Sigmoid colon (tissue), 7 donors: ENCODE measurements at regions of chr2 and their contacts with region 1.

Region 1: GRCh38 chr2:64586883-64587481 is 62.9 kb downstream of the AFTPH start:
- DNase-seq: no peak
- H3K4me3 ChIP-seq: no peak overlapping the region
- H3K27ac ChIP-seq: no peak overlapping the region
- H3K4me1 ChIP-seq: peaks cover 0 to 6% (median 2%) of the 10 kb centered on the region in 4 donors
- H3K27me3 ChIP-seq: no peaks in the 10 kb centered on the region
- CTCF ChIP-seq: peak; percentile 33 to 60 (median 54)
- EP300 ChIP-seq: no peak
- POLR2A ChIP-seq: no peak

Region 2: GRCh38 chr2:64214281-64215115 is 372.5 kb before region 1 on chr2:
- intact Hi-C with region 1: no loop called
- DNase-seq: no peak
- H3K4me3 ChIP-seq: no peak overlapping the region
- H3K27ac ChIP-seq: peak overlapping the region; percentile 38 to 69 (median 44)
- H3K4me1 ChIP-seq: peaks cover 0 to 15% (median 12%) of the 10 kb centered on the region in 4 donors
- H3K27me3 ChIP-seq: no peaks in the 10 kb centered on the region
- CTCF ChIP-seq: no peak
- EP300 ChIP-seq: no peak
- POLR2A ChIP-seq: no peak

Region 3: DNA sequence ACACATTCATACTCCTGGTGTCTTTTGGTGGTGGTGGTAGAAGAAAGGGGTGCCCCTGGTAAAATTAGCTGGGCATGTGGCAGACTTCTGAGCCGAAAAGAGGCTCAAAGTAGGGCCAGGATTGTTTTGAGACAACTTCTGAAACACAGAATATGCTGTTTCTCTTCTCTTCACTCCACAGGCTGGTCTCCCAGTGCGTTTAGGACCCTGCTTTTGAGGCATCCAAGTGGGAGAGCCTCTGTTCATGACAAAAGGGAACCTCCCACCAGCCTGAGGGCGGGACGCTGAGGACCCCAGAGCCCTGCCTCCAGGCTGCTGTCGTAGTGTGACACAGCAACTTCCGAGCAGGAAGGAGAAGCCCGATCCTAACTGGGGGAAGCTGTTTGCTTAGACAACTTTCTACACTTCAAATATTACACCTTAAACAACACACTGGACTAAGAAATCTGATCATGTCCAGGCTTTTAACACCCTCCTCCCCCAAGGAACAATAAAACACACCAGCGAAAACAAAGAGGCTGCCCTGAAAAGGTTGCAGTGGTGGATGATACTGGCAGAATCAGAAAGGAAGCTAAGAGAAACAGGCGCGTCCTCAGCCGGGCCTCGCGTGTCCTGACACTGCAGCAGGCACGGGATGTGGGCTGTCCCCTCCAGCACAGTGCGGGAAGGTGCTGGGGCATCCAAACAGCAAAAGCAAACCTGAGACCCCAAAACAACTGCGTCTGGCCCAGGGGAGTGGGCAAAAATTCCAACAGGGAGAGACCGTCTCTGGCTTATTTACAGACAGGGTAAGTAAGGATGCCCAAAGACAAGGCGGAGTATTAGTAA is 57.4 kb after region 1 on chr2:
- intact Hi-C with region 1: loop called (anchors 5 kb)
- DNase-seq: peak; percentile 92
- H3K4me3 ChIP-seq: peak overlapping the region; percentile 31 to 52 (median 46)
- H3K27ac ChIP-seq: peak overlapping the region; percentile 90 to 93 (median 91)
- H3K4me1 ChIP-seq: peaks cover 0 to 68% (median 57%) of the 10 kb centered on the region in 4 donors
- H3K27me3 ChIP-seq: no peaks in the 10 kb centered on the region
- CTCF ChIP-seq: no peak
- EP300 ChIP-seq: no peak
- POLR2A ChIP-seq: peak; percentile 77 to 91

Region 4: DNA sequence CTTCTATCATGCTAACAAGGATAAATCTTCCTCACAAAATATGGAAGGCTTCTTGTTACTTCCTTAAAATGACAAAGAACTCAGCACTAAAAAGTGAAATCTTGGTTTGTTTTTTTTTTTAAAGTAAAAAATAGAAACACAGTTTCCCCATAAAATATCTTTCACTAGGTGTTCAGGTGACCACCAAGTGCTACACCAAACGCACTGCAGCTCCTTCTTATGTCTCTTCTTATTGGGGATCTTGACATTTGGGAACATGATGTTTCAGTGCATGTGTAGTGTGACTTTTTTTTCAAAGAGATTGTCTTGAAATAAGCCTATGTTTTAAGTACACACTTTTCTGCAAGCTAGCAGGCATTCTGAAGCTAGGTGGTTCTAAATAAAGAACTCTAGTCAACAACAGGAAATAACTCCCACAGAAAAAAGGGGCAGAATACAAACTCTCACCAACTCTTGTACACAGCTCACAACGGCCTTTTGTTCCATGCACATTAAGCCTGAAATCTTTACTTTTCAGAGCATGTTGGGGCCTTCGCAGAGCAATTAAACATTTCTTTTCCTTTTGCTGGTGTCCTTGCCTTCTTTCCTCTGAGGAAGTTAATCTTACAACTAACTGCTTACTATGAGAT is 79.9 kb after region 1 on chr2:
- intact Hi-C with region 1: no loop called
- DNase-seq: no peak
- H3K4me3 ChIP-seq: no peak overlapping the region
- H3K27ac ChIP-seq: no peak overlapping the region
- H3K4me1 ChIP-seq: no peaks in the 10 kb centered on the region
- H3K27me3 ChIP-seq: no peaks in the 10 kb centered on the region
- CTCF ChIP-seq: no peak
- EP300 ChIP-seq: no peak
- POLR2A ChIP-seq: no peak

Region 5: GRCh38 chr2:64865073-64865830 is 278.3 kb after region 1 on chr2:
- intact Hi-C with region 1: loop called (anchors 1 kb)
- DNase-seq: peak; percentile 84
- H3K4me3 ChIP-seq: peak overlapping the region; percentile 60 to 67 (median 64)
- H3K27ac ChIP-seq: peak overlapping the region; percentile 86 to 93 (median 90)
- H3K4me1 ChIP-seq: peaks cover 0 to 20% (median 15%) of the 10 kb centered on the region in 4 donors
- H3K27me3 ChIP-seq: no peaks in the 10 kb centered on the region
- CTCF ChIP-seq: peak in 2 of 4 experiments; percentile 24 to 67
- EP300 ChIP-seq: no peak
- POLR2A ChIP-seq: no peak

Region 6: DNA sequence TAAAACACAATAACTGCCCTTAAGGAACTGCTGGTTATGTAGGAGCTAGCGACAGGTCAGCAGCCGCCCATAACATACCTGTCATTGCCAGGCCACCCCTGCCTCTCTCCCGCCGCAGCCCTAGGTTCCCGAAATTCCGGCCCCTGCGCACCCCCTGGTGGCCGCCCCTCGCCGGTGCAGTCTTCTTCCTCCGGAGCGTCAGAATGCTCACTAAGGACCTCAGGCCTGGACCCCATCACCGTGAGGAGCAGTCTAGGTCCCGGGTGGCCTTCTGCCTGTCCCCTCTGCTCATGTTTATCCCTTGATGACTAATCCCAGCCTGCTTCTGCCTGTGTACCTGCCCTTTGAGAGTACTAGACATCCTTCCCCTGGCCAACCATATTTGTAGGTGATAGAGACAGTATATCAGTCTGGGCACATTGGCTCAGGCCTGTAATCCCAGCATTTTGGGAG is 286.5 kb after region 1 on chr2:
- intact Hi-C with region 1: loop called (anchors 2 kb)
- DNase-seq: peak; percentile 86
- H3K4me3 ChIP-seq: peak overlapping the region in 3 of 4 donors; percentile 6 to 34 (median 27)
- H3K27ac ChIP-seq: no peak overlapping the region
- H3K4me1 ChIP-seq: peaks cover 0 to 18% (median 6%) of the 10 kb centered on the region in 4 donors
- H3K27me3 ChIP-seq: no peaks in the 10 kb centered on the region
- CTCF ChIP-seq: peak; percentile 83 to 97 (median 94)
- EP300 ChIP-seq: no peak
- POLR2A ChIP-seq: no peak